Left colon (tissue), 2 donors: ENCODE measurements at regions of chr1 and their contacts with region 1.

Region 1: DNA sequence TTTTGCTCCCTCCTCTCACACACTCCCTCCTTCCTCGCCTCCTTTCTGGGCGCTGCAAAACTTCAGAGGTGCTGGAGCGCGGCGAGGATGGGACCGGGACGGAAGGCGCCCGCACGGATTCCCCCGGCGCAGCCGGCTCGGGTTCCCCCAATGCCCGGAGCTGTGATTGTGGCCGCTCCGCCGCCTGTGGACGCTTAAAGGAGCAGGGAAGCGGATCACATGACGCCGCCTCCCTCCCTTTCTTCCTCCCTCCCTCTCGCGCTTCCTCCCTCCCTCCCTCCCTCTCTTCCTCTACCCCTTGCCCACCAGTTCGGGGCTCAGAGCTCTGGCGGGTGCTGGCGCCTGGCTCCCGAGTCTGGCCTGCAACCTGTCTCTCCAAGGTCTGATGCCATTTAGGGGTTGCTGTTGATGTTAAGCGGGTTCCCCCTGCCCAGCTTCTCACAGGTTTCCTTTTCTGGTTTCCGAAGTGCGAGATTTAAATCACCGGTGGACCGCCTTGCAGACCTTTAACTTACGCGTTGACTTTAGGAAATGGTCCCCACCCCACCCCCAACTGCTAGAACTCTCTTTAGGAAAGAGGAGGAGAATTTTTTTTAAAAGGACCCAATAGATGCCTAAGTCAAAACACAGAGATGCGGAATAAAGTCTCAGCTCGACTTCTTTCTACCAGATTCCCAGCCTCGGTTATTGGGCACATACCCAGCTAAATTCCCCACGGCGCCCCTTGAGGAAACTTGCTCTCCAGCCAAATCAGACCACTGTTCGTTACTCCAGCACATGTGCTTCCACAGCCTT is at the start of gene WLS:
- DNase-seq: peak; percentile 84 to 86
- ATAC-seq: peak; percentile 87
- total RNA-seq, gene WLS: 126 to 150 TPM

Region 2: DNA sequence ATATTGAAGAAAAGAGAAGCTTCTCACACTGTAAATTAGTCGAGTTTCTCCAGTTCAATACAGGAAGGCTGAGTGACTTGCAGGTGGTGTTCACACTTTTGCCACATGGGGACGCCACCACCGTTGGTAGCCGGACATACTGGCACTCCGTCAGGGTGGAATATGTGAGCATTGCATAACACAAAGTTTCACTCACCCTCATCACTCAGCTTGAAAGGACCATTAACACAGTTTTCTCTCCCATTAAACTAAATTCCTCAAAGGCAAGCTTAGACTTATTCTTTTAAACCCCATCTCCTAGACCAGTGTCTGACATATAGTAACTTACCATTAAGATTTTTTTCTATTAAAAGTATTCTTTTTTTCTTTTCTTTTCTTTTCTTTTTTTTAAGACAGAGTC is 697.1 kb before region 1 on chr1:
- intact Hi-C with region 1: no loop called
- DNase-seq: peak; percentile 68 to 85
- ATAC-seq: peak; percentile 83

Region 3: GRCh38 chr1:68173911-68174737 is 58.4 kb before region 1 on chr1:
- intact Hi-C with region 1: loop called in 1 of 2 experiments (anchors 5 kb)
- DNase-seq: peak; percentile 51 to 57
- ATAC-seq: peak; percentile 35

Region 4: GRCh38 chr1:68321084-68321685 is 88.6 kb after region 1 on chr1:
- intact Hi-C with region 1: loop called in 1 of 2 experiments (anchors 5 kb)
- DNase-seq: peak; percentile 70 to 83
- ATAC-seq: peak; percentile 100